AG04449 (cell line): ENCODE measurements at regions of chr3 and their contacts with region 1.

Region 1: GRCh38 chr3:55746808-55747413 is 259.8 kb upstream of the WNT5A start:
- DNase-seq: no peak
- H3K4me3 ChIP-seq: no peak overlapping the region
- CTCF ChIP-seq: peak; percentile 12

Region 2: GRCh38 chr3:54600441-54601204 is 1146.3 kb before region 1 on chr3:
- CTCF ChIA-PET with region 1: no interaction called
- POLR2A ChIA-PET with region 1: no interaction called
- DNase-seq: no peak
- H3K4me3 ChIP-seq: no peak overlapping the region
- CTCF ChIP-seq: no peak

Region 3: DNA sequence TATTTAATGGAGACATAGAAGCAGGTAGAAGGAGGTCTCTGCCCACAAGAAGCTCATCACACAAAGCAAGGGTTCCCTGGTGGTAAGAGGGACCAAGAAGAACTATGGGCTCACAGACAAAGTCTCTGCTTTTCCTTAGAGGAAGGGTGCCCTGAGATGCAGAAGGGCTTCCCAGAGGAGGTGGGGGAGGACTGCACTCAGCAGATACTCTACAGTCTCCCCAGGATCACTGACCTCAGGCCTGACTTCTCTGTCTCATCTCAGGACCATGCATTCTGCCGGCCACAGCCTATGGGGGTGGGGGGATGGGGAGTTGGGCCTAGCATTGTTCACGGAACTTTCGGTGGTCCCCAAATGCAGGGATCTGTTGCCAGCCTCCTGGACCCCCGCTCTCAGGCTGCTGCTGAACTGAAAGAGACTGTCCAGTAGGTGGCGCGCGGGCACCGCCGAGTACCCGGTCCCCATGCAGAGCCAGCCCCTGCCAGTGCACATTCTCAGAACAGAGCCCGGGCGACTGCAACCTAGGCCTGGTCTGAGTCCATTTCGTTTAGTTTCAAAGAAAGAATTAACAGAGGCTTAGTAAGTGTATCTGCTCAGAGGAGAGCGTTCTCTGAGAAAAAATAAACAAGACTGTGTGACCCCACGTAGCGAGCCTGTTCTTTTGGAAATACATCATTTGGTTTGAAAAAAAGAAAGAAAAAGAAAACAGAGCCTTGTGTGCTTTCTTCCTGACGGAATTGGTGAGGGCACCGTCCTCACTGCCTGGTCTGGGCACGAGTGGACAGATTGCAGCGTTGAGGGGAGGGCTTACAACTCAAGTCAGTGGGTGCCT is 893.1 kb before region 1 on chr3:
- CTCF ChIA-PET with region 1: interaction called, 16 read pairs
- POLR2A ChIA-PET with region 1: no interaction called
- DNase-seq: no peak
- H3K4me3 ChIP-seq: no peak overlapping the region
- CTCF ChIP-seq: peak; percentile 94

Region 4: DNA sequence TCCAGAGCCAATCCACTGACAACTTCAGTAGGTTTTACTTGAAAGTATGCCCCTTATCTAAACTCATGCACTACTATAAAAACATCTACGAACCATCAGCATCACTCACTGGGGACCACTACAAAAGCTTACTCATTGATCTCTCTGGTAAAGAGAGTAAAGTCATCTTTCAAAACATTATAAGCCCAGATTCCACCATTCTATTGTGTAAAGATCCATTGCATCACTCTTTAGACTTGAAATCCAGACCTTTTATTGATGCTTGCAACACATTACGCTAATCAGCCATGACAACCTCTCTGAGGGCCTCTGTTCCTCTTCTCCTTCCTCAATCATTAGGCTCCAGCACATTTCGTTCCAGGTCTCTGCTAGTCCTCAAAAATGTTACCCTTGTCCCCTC is 10.9 kb before region 1 on chr3:
- CTCF ChIA-PET with region 1: interaction called, 59 read pairs
- POLR2A ChIA-PET with region 1: no interaction called
- DNase-seq: no peak
- H3K4me3 ChIP-seq: no peak overlapping the region
- CTCF ChIP-seq: no peak

Region 5: DNA sequence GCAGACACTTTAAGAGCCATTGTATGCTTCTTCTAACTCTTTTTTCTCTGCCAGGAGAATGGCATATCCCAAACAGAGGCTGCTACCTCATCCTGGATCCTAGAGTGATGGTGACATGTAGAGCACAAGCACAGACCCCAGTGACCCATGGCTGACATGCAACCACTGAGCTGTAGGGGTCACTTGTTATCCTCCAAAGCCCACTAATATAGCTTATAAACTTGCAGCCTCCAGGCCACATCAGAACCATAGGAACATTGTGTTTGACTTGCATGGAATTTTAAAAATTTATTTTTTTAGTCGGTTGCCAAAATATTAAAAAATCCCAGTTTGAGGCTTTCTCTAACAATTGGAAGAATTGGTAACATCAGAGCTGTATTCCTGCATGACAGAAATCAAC is 23.2 kb after region 1 on chr3:
- CTCF ChIA-PET with region 1: no interaction called
- POLR2A ChIA-PET with region 1: no interaction called
- DNase-seq: no peak
- H3K4me3 ChIP-seq: no peak overlapping the region
- CTCF ChIP-seq: no peak